ENCODE measurements at regions of chr16 and their contacts with region 1.

Region 1: DNA sequence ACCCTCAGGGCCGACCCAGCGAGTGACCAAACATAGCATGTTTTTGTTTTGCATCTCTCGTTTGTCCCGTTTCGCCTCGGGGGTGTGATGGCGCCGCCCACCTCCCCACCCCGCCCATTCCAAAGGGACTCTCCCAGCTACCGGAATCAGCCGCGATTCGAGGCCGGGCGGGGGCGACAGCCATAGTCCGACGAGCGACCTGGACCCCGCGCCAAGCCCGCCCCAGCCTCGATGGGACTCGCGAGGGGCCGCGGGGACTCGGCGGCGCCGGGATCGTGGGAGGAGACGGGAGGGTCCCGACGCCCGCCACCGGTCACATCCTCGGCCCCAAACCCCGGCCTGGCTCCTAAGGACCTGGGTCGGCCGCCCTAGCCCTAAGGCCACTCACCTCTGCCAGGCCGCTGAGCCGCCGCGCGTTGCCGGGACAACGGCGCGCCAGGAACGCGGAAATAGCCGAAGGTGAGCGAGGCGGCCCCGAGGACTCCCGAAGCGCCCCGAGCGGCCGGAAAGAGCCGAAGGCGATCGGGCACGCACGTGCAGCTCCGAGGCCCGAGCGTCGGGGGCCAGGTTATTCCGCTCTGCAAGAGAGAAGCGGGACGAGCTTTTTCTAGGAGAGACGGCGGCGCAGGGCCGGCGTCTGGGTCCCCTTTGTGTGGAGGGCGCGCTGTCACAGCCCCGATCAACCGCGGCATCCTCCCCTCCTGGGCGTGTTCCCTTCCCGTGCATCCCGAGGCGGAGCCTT is 1.4 kb downstream of the IFT140 start:
- DNase-seq: peak; percentile 91 to 92
- H3K4me3 ChIP-seq: peak overlapping the region; percentile 48 to 84 (median 67)
- H3K27ac ChIP-seq: peak overlapping the region; percentile 25 to 71 (median 44)
- H3K4me1 ChIP-seq: peaks cover 23 to 35% of the 10 kb centered on the region in 2 donors
- H3K27me3 ChIP-seq: no peaks in the 10 kb centered on the region
- CTCF ChIP-seq: no peak
- POLR2A ChIP-seq: peak in 1 of 2 donors; percentile 67

Region 2: GRCh38 chr16:1078579-1079021 is 531.8 kb before region 1 on chr16:
- intact Hi-C with region 1: no loop called
- DNase-seq: no peak
- H3K4me3 ChIP-seq: no peak overlapping the region
- H3K27ac ChIP-seq: no peak overlapping the region
- H3K4me1 ChIP-seq: no peaks in the 10 kb centered on the region
- H3K27me3 ChIP-seq: no peaks in the 10 kb centered on the region
- CTCF ChIP-seq: no peak
- POLR2A ChIP-seq: no peak

Region 3: DNA sequence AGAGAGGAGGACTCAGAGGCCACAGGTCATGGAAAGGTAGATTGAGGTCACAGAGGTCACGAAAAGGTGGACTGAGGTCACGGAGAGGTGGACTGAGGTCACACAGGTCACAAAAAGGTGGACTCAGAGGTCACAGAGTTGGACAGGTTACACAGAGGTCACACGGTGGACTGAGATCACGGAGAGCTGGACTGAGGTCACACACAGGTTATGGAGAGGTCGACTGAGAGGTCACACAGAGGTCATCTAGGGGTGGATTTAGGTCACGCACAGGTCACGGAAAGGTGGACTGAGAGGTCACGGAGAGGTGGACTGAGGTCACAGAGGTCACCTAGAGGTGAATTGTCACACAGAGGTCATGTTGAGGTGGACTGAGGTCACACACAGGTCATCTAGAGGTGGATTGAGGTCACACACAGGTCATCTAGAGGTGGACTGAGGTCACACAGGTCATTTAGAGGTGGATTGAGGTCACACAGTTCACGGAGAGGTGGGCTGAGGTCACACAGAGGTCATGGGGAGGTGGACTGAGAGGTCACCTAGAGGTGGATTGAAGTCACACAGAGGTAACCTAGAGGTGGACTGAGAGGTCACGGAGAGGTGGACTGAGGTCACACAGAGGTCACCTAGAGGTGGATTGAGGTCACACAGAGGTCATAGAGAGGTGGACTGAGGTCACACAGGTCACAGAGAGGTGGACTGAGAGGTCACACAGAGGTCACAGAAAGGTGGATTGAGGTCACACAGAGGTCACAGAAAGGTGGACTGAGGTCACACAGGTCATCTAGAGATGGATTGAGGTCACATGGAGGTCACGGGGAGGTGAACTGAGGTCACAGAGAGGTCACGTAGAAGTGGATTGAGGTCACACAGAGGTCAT is 40.9 kb after region 1 on chr16:
- intact Hi-C with region 1: no loop called
- DNase-seq: no peak
- H3K4me3 ChIP-seq: no peak overlapping the region
- H3K27ac ChIP-seq: no peak overlapping the region
- H3K4me1 ChIP-seq: no peaks in the 10 kb centered on the region
- H3K27me3 ChIP-seq: no peaks in the 10 kb centered on the region
- CTCF ChIP-seq: no peak
- POLR2A ChIP-seq: no peak

Region 4: DNA sequence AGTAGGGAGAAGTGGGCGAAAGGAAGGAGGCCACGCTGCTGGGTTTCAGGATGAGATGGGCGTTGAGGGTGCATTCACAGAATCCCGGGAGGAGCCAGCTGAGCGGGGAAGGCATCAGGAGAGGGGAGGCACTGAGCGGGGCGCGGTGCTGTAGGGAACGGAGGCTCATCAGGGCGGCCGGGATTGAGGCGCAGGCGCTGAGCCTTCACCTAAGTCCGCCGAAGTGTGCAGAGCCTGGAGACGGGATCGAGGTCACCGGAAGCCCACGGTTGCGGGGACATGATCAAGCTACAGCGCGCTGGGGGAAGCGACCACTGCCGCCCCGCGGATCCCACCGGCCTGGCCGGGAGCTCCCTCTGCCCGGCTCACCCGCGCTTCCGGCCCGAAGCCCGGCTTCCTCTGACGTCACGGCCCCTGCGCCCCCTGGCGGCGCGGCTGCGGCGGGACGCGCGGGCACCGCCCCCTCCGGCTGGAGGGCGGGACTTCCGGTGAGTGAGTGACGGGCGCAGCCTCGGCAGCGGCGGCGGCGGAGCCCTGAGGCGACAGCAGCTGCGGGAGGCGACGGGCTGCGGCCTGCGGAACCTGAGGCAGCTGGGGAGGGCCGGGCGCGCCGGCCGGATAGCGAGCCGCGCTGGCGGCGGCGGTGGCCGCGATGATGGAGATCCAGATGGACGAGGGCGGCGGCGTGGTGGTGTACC is 95.4 kb after region 1 on chr16 and contains the start of gene MAPK8IP3:
- intact Hi-C with region 1: loop called (anchors 10 kb)
- DNase-seq: peak; percentile 82 to 87
- H3K4me3 ChIP-seq: peak within 1 kb of the TSS; percentile 83 to 97 (median 88)
- H3K27ac ChIP-seq: peak within 1 kb of the TSS; percentile 71 to 91 (median 83)
- H3K4me1 ChIP-seq: peaks cover 18 to 20% of the 10 kb centered on the region in 2 donors
- H3K27me3 ChIP-seq: no peaks in the 10 kb centered on the region
- CTCF ChIP-seq: peak; percentile 48 to 100 (median 97)
- POLR2A ChIP-seq: peak; percentile 60 to 96
- total RNA-seq, gene MAPK8IP3: 45.7 to 137 (median 60.4) TPM

Measured in thyroid gland (tissue), 4 donors.